ENCODE measurements at regions of chr3 and their contacts with region 1.

Region 1: DNA sequence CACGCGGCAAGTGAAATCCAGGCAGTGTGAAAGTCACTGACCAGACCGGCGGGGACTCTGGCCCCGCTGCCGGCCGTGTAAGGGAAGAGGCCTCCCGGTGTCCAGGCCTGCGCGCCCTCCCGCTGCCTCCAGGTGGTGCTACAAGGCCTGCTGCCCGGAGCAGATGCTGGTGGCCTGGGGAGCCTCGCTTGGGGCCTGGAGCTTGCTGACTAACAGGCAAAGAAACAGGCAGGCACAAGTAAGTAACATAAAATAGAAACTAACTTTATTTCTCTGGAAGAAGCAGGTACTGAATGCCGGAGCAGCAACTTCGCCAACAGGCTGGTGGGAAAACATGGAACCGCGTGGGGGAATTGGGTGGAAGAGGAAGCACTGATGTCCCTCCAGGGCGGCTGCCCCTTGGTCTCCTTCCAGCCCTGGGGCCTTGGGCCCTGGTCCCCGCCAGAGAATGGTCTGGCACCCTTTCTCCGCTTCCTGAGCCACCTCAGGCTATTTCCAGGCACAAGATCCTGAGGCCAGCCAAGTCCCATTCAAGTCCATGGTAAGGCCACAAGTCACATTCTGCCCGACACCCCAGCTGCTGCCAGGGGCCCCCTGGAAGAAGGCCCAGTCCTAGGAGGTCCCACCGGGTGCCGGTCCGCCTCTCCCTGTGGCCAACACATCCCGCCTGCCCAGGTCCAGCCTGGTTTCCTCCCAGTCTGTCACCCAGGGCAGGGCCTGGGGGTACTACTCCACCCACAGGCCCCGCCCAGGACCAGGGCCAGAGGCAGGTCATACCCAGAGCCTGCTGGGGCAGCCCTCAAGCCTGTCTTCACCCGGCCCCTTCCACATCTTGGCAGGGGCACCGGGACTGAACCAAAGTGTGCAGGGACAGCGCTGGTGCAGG is 45.0 kb downstream of the TNK2 start:
- DNase-seq: peak; percentile 94
- H3K4me3 ChIP-seq: no peak overlapping the region; a peak in 1 of 4 replicates
- H3K27ac ChIP-seq: peak overlapping the region in 1 of 2 experiments; percentile 1; a peak in 2 of 4 replicates
- H3K4me1 ChIP-seq: peaks cover 0 to 6% of the 10 kb centered on the region in 2 experiments; a peak in 1 of 4 replicates
- H3K27me3 ChIP-seq: no peaks in the 10 kb centered on the region
- CTCF ChIP-seq: peak; percentile 89
- EP300 ChIP-seq: no peak
- RAD21 ChIP-seq: peak; percentile 87

Region 2: GRCh38 chr3:195876297-195877031 is 13.1 kb after region 1 on chr3:
- CTCF ChIA-PET with region 1: interaction called, 606 read pairs
- POLR2A ChIA-PET with region 1: no interaction called
- DNase-seq: no peak
- H3K4me3 ChIP-seq: no peak overlapping the region
- H3K27ac ChIP-seq: no peak overlapping the region
- H3K4me1 ChIP-seq: no peaks in the 10 kb centered on the region
- H3K27me3 ChIP-seq: no peaks in the 10 kb centered on the region
- CTCF ChIP-seq: no peak
- EP300 ChIP-seq: no peak
- RAD21 ChIP-seq: no peak

Region 3: GRCh38 chr3:195909644-195910508 is 46.5 kb after region 1 on chr3:
- CTCF ChIA-PET with region 1: interaction called, 606 read pairs
- POLR2A ChIA-PET with region 1: no interaction called
- DNase-seq: peak; percentile 99
- H3K4me3 ChIP-seq: peak overlapping the region in 1 of 2 experiments; percentile 72; a peak in 3 of 4 replicates
- H3K27ac ChIP-seq: peak overlapping the region in 1 of 2 experiments; percentile 58; a peak in 1 of 4 replicates
- H3K4me1 ChIP-seq: peaks cover 14 to 32% of the 10 kb centered on the region in 2 experiments; a peak in 2 of 4 replicates
- H3K27me3 ChIP-seq: no peaks in the 10 kb centered on the region
- CTCF ChIP-seq: no peak
- EP300 ChIP-seq: no peak
- RAD21 ChIP-seq: no peak

Measured in SK-N-SH (cell line).